PC-9 (cell line): ENCODE measurements at regions of chr1 and their contacts with region 1.

Region 1: GRCh38 chr1:50735443-50735842 is 224.6 kb downstream of the FAF1 start:
- DNase-seq: no peak
- H3K4me3 ChIP-seq: no peak overlapping the region
- H3K27ac ChIP-seq: no peak overlapping the region
- H3K4me1 ChIP-seq: no peaks in the 10 kb centered on the region
- H3K27me3 ChIP-seq: no peaks in the 10 kb centered on the region
- CTCF ChIP-seq: peak; percentile 81

Region 2: GRCh38 chr1:50368179-50369012 is 367.0 kb before region 1 on chr1:
- CTCF ChIA-PET with region 1: no interaction called
- POLR2A ChIA-PET with region 1: no interaction called
- intact Hi-C with region 1: loop called (anchors 2 kb)
- DNase-seq: peak in 1 of 2 experiments; percentile 23
- H3K4me3 ChIP-seq: no peak overlapping the region
- H3K27ac ChIP-seq: no peak overlapping the region
- H3K4me1 ChIP-seq: no peaks in the 10 kb centered on the region
- H3K27me3 ChIP-seq: peaks cover 6% of the 10 kb centered on the region; the same call in 1 of the 2 replicates
- CTCF ChIP-seq: peak; percentile 83

Region 3: DNA sequence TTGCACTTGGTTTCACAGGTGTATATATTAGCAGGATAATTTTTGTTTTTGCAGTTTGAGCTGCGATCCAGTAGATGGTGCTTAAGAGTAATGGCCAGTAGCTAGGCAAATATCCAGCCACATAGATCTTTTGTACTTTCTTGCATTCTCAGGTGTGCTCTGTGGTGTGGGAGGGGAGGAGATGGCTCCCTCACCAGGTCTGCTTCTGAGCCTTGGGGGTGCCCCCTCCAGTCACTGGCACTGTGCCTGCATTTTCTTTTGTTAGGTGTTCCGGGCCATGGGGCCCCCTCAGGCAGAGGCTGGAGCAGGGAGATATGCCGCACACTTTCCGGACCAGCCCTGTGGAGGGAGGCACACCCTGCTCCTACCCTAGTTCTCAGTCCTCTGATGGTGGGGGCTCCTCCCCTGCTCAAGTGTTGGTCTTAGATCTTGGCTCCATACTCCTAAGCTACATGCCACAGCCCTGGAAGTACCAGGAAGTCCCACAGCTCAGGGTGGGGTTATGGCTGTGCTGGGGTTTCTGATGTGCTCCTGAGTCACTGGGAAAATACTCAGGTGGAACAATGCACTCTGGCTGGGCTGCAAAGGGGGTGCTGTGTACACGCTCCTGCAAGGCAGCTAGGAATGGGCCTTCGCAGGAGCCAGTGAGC is 114.6 kb before region 1 on chr1:
- CTCF ChIA-PET with region 1: interaction called, 8 read pairs
- POLR2A ChIA-PET with region 1: interaction called, 3 read pairs
- intact Hi-C with region 1: loop called (anchors 1 kb)
- DNase-seq: peak; percentile 83 to 95
- H3K4me3 ChIP-seq: no peak overlapping the region
- H3K27ac ChIP-seq: peak overlapping the region; percentile 62
- H3K4me1 ChIP-seq: no peaks in the 10 kb centered on the region
- H3K27me3 ChIP-seq: no peaks in the 10 kb centered on the region
- CTCF ChIP-seq: peak; percentile 67

Region 4: GRCh38 chr1:50666849-50667248 is 68.6 kb before region 1 on chr1:
- CTCF ChIA-PET with region 1: no interaction called
- POLR2A ChIA-PET with region 1: interaction called, 18 read pairs
- intact Hi-C with region 1: no loop called
- DNase-seq: no peak
- H3K4me3 ChIP-seq: no peak overlapping the region
- H3K27ac ChIP-seq: no peak overlapping the region
- H3K4me1 ChIP-seq: no peaks in the 10 kb centered on the region
- H3K27me3 ChIP-seq: no peaks in the 10 kb centered on the region
- CTCF ChIP-seq: no peak